Heart right ventricle (tissue), 16 donors: ENCODE measurements at regions of chr5 and their contacts with region 1.

Region 1: DNA sequence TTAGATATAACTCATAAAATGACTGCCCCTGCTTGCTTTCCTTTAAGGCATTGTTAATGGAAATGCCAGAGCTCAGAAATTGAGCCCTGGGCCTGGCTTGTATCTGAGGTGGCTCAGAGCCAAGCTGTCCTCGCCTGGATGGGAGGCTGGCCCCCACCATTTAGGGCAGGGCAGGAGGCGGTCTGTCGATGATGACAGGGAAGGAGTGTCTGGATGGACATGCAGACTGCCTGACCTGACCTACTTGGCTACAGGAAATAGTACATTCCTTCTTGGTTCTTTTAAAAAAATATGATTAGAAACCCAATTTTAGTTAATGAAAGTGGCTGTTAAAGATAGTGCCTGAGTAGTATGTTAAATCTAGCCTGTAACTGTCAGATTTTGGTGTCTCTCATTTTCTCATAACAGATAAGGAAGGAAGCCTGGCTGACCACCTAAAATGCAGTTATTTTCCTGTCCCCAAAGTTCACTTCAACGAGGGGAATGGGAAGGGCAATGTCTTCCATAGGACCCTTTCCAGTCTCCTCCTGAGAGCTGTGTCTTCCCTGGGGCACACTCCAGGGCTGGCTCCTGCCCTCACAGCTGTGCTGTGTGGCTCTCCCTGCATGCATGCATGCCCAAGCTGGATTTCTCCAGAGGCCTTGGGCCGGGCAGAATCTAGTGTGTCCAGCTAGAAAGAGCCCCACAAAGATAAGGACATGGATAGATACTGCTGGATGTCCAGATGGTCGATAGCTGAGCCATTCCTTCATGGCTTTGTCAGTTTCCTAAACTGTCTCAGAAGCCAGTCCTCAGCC is 42.3 kb downstream of the MACROH2A1 start:
- DNase-seq: peak; percentile 81 to 83
- ATAC-seq: peak; percentile 94 to 97 (median 96)
- H3K4me3 ChIP-seq: no peak overlapping the region
- H3K27ac ChIP-seq: peak overlapping the region; percentile 4 to 72 (median 58)
- H3K4me1 ChIP-seq: peaks cover 18 to 54% (median 49%) of the 10 kb centered on the region in 9 donors
- H3K27me3 ChIP-seq: no peaks in the 10 kb centered on the region
- CTCF ChIP-seq: no peak

Region 2: DNA sequence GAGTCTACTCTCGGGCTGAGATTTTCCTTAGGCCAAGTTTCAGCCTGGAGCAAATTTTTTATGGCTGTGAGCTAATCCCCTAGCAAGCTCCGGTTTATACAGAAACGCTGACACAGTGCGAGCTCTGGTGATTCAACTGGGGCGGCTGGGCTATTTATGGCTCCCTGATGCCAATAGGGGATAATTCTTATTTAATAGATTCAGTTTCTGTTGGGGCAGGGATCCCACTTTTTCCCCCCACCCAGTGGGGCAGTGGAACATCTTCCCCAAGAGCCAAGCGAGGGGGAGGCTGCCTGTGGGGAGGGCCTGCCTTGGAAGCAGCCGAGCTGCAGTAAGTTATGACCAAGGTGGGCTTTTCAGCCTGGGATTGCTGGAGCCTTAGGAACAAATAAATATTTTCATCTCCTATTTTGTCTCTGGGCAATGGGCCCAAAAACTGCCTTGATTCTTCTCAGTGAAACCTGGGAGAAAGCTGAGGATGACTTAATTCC is 86.7 kb before region 1 on chr5:
- intact Hi-C with region 1: no loop called
- DNase-seq: no peak
- ATAC-seq: no peak
- H3K4me3 ChIP-seq: no peak overlapping the region
- H3K27ac ChIP-seq: no peak overlapping the region
- H3K4me1 ChIP-seq: no peaks in the 10 kb centered on the region
- H3K27me3 ChIP-seq: peaks cover 0 to 14% (median 0%) of the 10 kb centered on the region in 7 donors
- CTCF ChIP-seq: no peak

Region 3: GRCh38 chr5:135398853-135399523 is 42.3 kb after region 1 on chr5 and contains the start of gene MACROH2A1:
- intact Hi-C with region 1: loop called in 2 of 10 experiments (anchors 2 kb)
- DNase-seq: peak; percentile 91
- ATAC-seq: peak; percentile 94 to 98 (median 97)
- H3K4me3 ChIP-seq: peak within 1 kb of the TSS; percentile 62 to 99 (median 94)
- H3K27ac ChIP-seq: peak within 1 kb of the TSS; percentile 72 to 98 (median 94)
- H3K4me1 ChIP-seq: peaks cover 26 to 54% (median 52%) of the 10 kb centered on the region in 9 donors
- H3K27me3 ChIP-seq: no peaks in the 10 kb centered on the region
- CTCF ChIP-seq: peak in 3 of 9 donors; percentile 11 to 26 (median 19)
- total RNA-seq, gene MACROH2A1: 80.0 to 125 (median 98.0) TPM